Activated B cell treated with CpG ODN at 0.5 μM for 24 hours (primary cell): ENCODE measurements at regions of chr2 and their contacts with region 1.

Region 1: DNA sequence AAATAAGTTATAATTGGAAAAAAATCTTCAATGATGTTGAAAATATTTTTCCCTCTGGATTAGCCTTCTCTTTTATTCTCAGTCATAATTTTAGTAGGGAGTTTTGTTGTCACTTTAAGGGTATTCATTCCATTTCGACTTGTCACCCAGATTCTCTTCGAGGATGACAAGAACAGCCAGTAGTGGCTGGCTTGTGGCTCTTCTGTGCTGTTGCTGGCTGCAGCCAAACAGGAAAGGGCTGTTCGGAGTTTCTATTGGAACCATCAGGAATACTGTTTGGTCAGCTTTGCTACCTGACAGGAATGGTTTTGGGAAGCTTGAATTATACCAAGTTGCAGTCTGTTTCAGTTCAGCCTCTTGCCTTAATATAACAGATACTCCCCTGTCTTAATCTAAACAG is 41.6 kb downstream of the MGAT5 start:
- DNase-seq: no peak
- ATAC-seq: no peak
- H3K4me3 Mint-ChIP-seq: no peak overlapping the region
- H3K27ac Mint-ChIP-seq: no peak overlapping the region
- H3K4me1 Mint-ChIP-seq: peaks cover 20% of the 10 kb centered on the region
- H3K27me3 Mint-ChIP-seq: no peaks in the 10 kb centered on the region
- CTCF ChIP-seq: no peak

Region 2: DNA sequence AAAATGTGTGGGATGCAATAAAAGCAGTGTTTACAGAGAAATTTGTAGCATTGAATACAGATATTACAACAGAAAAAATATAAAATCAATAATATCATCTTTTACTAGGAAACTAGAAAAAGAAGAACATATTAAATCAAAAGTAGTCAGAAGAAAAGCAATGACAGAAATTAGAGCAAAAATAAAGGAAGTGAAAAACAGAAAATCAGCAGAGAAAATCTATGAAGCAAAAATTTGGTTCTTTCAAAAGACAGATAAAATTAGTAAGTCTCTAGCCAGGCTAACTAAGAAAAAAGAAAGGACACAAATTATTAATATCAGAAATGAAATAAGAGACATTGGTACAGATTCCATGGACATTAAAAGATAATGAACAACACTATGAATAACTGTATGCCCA is 253.6 kb before region 1 on chr2:
- CTCF ChIA-PET with region 1: no interaction called
- POLR2A ChIA-PET with region 1: no interaction called
- intact Hi-C with region 1: no loop called
- DNase-seq: no peak
- ATAC-seq: no peak
- H3K4me3 Mint-ChIP-seq: peak overlapping the region; percentile 21
- H3K27ac Mint-ChIP-seq: peak overlapping the region; percentile 90
- H3K4me1 Mint-ChIP-seq: peaks cover 69% of the 10 kb centered on the region
- H3K27me3 Mint-ChIP-seq: no peaks in the 10 kb centered on the region
- CTCF ChIP-seq: no peak

Region 3: DNA sequence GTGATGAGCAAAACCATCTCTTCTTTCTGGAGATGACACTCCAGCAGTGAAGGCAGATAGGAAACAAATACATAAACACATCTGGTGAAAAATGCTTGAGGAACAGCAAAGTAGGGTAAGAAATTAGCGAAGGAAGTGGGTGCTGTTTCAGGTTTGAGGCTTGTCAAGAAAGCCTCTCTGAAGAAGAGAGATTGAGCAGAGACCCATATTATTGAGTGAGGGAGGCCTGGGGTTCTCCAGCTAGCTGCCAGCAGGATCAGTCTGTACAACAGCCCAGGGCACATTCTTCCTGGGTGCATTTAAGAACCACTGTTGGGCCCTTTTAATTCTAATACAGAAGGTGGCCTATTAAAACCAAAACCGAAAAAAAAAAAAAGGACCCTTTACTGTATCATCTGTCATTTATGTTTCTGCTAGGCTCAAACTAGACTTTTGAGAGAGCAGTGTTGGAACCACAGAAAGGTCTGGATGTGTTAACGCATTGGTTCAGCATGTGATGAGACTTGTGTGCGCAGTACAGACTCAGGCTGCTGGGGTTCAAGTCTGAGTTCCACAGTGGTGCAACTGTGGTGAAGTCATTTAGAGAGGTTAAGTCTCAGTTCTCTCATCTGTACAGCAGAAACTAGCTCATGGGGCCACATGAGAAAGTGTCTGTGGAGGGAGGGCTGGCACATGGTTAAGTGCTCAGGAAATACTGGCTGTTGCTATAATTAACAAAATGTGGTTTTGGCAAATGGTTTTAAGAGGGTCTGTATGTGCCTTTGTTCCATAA is 12.6 kb before region 1 on chr2:
- CTCF ChIA-PET with region 1: interaction called, 3 read pairs
- POLR2A ChIA-PET with region 1: interaction called, 11 read pairs
- intact Hi-C with region 1: no loop called
- DNase-seq: no peak
- ATAC-seq: peak; percentile 70
- H3K4me3 Mint-ChIP-seq: peak overlapping the region; percentile 68
- H3K27ac Mint-ChIP-seq: peak overlapping the region; percentile 90
- H3K4me1 Mint-ChIP-seq: peaks cover 73% of the 10 kb centered on the region
- H3K27me3 Mint-ChIP-seq: no peaks in the 10 kb centered on the region
- CTCF ChIP-seq: no peak

Region 4: GRCh38 chr2:134491771-134492441 is 196.5 kb after region 1 on chr2:
- CTCF ChIA-PET with region 1: no interaction called
- POLR2A ChIA-PET with region 1: no interaction called
- intact Hi-C with region 1: no loop called
- DNase-seq: no peak
- ATAC-seq: no peak
- H3K4me3 Mint-ChIP-seq: no peak overlapping the region
- H3K27ac Mint-ChIP-seq: no peak overlapping the region
- H3K4me1 Mint-ChIP-seq: no peaks in the 10 kb centered on the region
- H3K27me3 Mint-ChIP-seq: no peaks in the 10 kb centered on the region
- CTCF ChIP-seq: no peak